ENCODE measurements at regions of chr2 and their contacts with region 1.

Region 1: DNA sequence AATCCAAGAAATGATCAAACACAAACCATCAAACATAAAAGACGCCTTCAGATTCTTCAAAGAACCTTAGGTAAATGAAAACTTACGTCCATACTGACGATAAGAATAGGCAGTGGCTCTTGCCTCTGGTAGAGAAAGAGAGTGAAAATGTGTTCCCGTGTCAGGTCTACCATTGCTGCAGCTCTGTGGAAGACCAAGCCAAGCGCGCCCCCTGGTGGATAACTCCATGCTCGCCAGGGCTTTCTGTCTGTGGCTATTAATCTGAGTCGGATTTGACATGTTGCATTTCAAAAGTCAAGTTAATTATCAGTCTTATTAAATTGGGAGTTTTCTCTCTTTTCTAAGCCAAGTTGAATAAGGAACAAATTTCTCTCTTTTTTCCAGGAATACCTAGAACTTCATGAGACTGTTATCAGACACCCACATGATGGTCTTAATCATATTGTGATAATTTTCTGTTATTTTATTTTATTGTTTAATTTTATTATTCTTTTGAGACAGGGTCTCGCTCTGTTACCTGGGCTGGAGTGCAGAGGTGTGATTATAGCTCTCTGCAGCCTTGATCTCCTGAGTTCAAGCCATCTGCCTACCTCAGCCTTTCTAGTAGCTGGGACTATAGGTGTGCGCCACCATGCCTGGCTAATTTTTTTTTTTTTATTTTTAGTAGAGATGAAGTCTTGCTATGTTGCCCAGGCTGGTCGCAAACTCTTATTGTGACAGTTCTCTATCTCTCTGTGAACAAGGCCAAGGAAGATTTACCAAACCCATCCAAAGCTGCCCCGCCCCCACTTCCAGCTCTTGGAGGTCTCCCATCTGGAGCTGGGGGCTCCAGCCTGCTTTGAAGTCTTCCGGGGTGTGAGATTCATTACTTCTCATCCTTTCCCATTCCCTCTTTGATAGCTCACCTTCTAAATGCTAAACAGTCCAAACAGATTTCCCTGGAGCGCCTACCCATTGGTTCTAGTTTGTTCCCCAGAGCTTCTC is 15.8 kb upstream of the ZAP70 start:
- DNase-seq: peak; percentile 93
- H3K4me3 Mint-ChIP-seq: no peak overlapping the region
- H3K27ac Mint-ChIP-seq: no peak overlapping the region
- H3K4me1 Mint-ChIP-seq: peaks cover 10% of the 10 kb centered on the region
- H3K27me3 Mint-ChIP-seq: peaks cover 2% of the 10 kb centered on the region

Region 2: DNA sequence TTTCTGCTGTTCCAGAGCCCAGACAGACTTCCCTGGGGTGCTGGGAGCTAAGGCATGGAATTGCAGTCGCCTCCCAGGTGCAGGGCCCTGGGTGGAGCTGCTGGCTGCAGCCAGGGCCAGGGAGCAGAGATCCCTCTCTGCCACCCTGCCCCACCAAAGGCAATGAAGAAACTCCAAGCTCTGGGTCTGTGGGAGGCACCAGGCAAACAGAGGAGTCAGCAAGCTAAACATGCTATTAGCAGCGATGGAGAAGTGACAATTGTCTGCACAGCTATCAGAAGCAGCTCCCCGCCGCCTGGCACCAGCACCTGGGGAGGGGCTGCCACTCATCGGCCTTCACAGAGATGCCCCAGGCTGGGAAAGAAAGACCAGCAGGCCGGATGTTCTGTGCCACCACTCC is 79.6 kb before region 1 on chr2:
- CTCF ChIA-PET with region 1: no interaction called
- POLR2A ChIA-PET with region 1: no interaction called
- DNase-seq: no peak
- H3K4me3 Mint-ChIP-seq: no peak overlapping the region
- H3K27ac Mint-ChIP-seq: no peak overlapping the region
- H3K4me1 Mint-ChIP-seq: peaks cover 6% of the 10 kb centered on the region
- H3K27me3 Mint-ChIP-seq: no peaks in the 10 kb centered on the region

Region 3: DNA sequence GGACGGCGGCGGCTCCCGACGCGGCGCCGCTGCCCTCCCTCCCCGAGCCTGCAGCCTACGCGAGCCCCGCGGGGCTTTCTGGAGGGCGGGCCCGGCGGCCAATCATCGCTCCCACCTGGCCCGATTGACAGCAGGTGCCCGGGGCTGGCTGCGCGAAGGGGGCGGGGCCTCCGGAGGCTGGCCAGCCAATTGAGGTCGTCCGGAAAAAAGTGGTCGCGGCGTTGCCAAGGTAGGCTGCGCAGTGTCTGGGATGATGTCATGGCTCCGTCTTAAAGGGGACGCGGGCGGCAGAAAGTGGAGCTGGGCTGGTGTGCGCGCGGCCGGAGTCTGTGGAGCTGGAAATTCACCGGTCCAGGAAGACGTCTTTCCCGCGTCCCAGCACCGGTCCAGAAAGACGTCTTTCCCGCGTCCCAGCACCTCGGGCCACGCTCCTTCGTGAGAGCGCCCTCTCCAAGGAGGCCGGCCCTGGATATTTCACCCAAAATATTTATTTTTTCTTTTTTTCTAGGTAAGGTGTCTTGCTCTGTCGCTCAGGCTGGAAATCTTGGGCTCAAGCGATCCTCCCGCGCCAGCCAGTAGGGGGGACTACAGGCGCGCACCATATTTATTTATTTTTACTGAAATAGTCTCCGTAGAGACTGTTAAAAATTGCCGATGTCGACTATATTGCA is 33.4 kb before region 1 on chr2 and contains the start of gene ACTR1B:
- CTCF ChIA-PET with region 1: interaction called, 48 read pairs
- POLR2A ChIA-PET with region 1: interaction called, 5 read pairs
- DNase-seq: peak; percentile 98
- H3K4me3 Mint-ChIP-seq: peak within 1 kb of the TSS; percentile 98
- H3K27ac Mint-ChIP-seq: peak within 1 kb of the TSS; percentile 99
- H3K4me1 Mint-ChIP-seq: peaks cover 34% of the 10 kb centered on the region
- H3K27me3 Mint-ChIP-seq: no peaks in the 10 kb centered on the region
- total RNA-seq, gene ACTR1B: 97.3 to 98.8 TPM

Region 4: DNA sequence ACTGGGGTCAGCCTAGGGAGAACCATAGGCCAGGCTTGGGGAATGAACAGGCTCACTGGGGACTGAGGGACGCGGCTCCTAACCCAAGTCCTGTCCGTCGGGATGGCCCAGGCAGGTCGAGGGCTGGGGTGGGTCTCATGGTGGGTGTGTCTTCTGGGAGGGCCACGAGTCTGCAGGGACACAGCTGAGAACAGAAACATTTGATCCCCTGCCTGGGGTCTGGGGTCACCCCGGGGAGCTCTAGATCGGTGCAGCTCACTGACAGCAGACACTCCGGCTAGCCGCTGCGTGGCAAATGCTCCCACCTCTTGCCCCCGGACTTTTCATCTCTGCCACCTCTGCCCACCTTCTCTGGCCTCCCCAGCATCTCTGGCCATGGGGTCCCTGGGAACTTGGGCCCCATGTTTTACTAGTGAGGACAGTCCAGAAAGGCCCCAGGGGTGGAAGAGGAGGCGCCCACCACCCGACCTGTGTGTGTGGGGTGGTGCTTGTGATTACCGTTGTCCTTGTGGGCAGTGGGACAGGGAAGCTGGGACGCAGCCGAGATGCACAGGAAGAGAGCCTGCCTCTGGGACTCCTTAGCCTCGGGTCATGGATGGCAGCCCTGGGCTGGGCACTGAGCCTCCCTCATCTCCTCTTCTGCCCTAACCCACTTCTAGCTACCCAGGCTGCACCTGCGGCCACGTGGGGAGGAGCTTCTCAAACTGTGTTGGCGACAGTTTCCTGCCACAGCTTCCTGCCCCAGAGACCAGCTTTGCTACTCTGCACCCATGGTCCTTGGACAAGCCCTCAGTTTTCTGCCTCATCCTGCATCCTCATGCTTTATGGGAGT is 20.7 kb after region 1 on chr2:
- CTCF ChIA-PET with region 1: interaction called, 29 read pairs
- POLR2A ChIA-PET with region 1: interaction called, 11 read pairs
- DNase-seq: peak; percentile 89
- H3K4me3 Mint-ChIP-seq: peak overlapping the region; percentile 95
- H3K27ac Mint-ChIP-seq: peak overlapping the region; percentile 98
- H3K4me1 Mint-ChIP-seq: peaks cover 76% of the 10 kb centered on the region
- H3K27me3 Mint-ChIP-seq: no peaks in the 10 kb centered on the region

Region 5: GRCh38 chr2:97751752-97752151 is 54.2 kb after region 1 on chr2:
- CTCF ChIA-PET with region 1: interaction called, 73 read pairs
- POLR2A ChIA-PET with region 1: interaction called, 4 read pairs
- DNase-seq: no peak
- H3K4me3 Mint-ChIP-seq: no peak overlapping the region
- H3K27ac Mint-ChIP-seq: no peak overlapping the region
- H3K4me1 Mint-ChIP-seq: peaks cover 16% of the 10 kb centered on the region
- H3K27me3 Mint-ChIP-seq: no peaks in the 10 kb centered on the region

Region 6: GRCh38 chr2:97796465-97797126 is 99.1 kb after region 1 on chr2:
- CTCF ChIA-PET with region 1: no interaction called
- POLR2A ChIA-PET with region 1: no interaction called
- DNase-seq: no peak
- H3K4me3 Mint-ChIP-seq: no peak overlapping the region
- H3K27ac Mint-ChIP-seq: no peak overlapping the region
- H3K4me1 Mint-ChIP-seq: no peaks in the 10 kb centered on the region
- H3K27me3 Mint-ChIP-seq: no peaks in the 10 kb centered on the region

Region 7: DNA sequence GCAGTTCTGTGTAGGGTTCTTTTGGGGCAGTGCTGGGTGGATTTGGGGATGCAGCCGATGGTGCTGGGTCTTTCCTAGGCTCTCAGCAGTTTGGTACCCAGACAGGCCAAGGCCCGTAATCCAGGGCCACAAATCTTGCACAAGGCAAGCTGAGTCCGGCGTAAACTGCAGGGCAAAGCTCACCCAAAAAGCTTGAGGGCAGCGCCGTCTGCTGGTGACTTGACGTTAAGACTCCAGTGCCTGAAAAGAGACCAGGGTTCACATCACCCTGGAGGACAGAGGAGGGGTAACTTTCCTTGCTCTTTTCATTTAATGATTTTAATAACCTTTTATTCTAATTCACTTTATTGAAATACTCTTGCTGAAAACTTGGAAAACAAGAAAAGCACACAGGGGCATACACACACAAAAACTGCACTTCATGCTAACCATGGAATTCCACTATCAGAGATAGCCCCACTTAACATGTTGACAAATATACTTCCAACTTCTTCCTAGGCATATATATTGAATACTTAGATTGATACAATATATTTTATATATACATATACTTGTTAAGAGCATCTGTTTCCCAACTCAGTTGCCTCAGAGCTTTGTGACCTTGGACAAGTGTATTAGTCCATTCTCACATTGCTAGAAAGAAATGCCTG is 687.6 kb after region 1 on chr2:
- CTCF ChIA-PET with region 1: interaction called, 12 read pairs
- POLR2A ChIA-PET with region 1: no interaction called
- DNase-seq: peak; percentile 80
- H3K4me3 Mint-ChIP-seq: no peak overlapping the region
- H3K27ac Mint-ChIP-seq: no peak overlapping the region
- H3K4me1 Mint-ChIP-seq: peaks cover 2% of the 10 kb centered on the region
- H3K27me3 Mint-ChIP-seq: peaks cover 17% of the 10 kb centered on the region

Measured in activated CD4-positive, alpha-beta memory T cell treated with anti-CD3 and anti-CD28 coated beads, Interleukin-2, amount 10 ng/mL, durations not matched to agents 7 days and 5 days (primary cell).